Ascending aorta (tissue), 2 donors: ENCODE measurements at regions of chr11 and their contacts with region 1.

Region 1: GRCh38 chr11:43920598-43921419 is 21.6 kb upstream of the C11orf96 start:
- DNase-seq: peak; percentile 66 to 95
- H3K4me3 ChIP-seq: peak overlapping the region in 1 of 2 donors; percentile 9
- H3K27ac ChIP-seq: peak overlapping the region; percentile 99
- H3K4me1 ChIP-seq: peaks cover 32 to 57% of the 10 kb centered on the region in 2 donors
- H3K27me3 ChIP-seq: no peaks in the 10 kb centered on the region
- CTCF ChIP-seq: no peak

Region 2: GRCh38 chr11:43576803-43577521 is 343.8 kb before region 1 on chr11:
- intact Hi-C with region 1: no loop called
- DNase-seq: no peak
- H3K4me3 ChIP-seq: peak overlapping the region; percentile 23 to 34
- H3K27ac ChIP-seq: no peak overlapping the region
- H3K4me1 ChIP-seq: peaks cover 2 to 28% of the 10 kb centered on the region in 2 donors
- H3K27me3 ChIP-seq: peaks cover 34% of the 10 kb centered on the region
- CTCF ChIP-seq: peak in 1 of 3 experiments; percentile 30

Region 3: GRCh38 chr11:43880640-43881159 is 40.1 kb before region 1 on chr11 and contains the start of gene ALKBH3:
- intact Hi-C with region 1: no loop called
- DNase-seq: peak; percentile 63 to 96
- H3K4me3 ChIP-seq: peak within 1 kb of the TSS; percentile 90 to 92
- H3K27ac ChIP-seq: peak within 1 kb of the TSS; percentile 65 to 71
- H3K4me1 ChIP-seq: peaks cover 9 to 13% of the 10 kb centered on the region in 2 donors
- H3K27me3 ChIP-seq: no peaks in the 10 kb centered on the region
- CTCF ChIP-seq: peak in 1 of 3 experiments; percentile 10
- total RNA-seq, gene ALKBH3: 19.1 TPM

Region 4: GRCh38 chr11:43895601-43896000 is 25.2 kb before region 1 on chr11:
- intact Hi-C with region 1: no loop called
- DNase-seq: no peak
- H3K4me3 ChIP-seq: no peak overlapping the region
- H3K27ac ChIP-seq: peak overlapping the region; percentile 41 to 42
- H3K4me1 ChIP-seq: no peaks in the 10 kb centered on the region
- H3K27me3 ChIP-seq: no peaks in the 10 kb centered on the region
- CTCF ChIP-seq: no peak

Region 5: GRCh38 chr11:43944761-43945311 is 24.0 kb after region 1 on chr11:
- intact Hi-C with region 1: loop called (anchors 1 kb)
- DNase-seq: peak in 1 of 2 donors; percentile 86
- H3K4me3 ChIP-seq: peak overlapping the region; percentile 69 to 98
- H3K27ac ChIP-seq: peak overlapping the region; percentile 95 to 99
- H3K4me1 ChIP-seq: peaks cover 0 to 18% of the 10 kb centered on the region in 2 donors
- H3K27me3 ChIP-seq: no peaks in the 10 kb centered on the region
- CTCF ChIP-seq: peak; percentile 81 to 90 (median 83)

Region 6: DNA sequence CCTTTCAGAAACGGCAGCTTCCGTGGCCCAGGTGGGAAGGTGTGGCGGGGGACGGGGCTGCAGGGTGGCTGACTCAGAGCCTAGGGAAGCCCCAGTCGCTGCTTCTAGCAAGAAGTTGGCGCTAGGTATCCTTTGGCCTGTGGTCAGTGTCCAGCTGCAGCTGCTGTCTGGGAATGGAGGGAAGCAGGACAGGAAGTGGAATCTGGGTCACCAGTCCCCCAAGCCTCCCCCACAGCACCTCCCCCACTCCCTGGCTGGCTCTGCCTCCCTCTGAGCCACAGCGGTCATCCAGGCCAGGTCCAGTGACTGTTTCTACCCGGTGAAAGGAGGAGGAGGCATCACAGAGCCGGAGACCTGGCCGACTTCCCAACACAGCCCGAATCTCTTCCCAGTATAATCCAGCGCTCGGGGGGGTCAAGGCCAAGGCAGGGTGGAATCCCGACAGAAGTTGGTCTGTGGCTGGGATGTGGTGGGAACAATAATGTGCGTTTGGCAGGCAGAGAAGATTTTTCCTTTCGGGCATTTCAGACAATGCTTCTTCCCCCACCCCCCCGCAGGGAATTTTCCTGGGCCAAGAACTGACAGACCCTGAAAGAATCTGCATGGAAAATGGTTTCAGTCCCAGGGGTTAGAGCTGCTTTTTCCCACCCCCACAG is 66.7 kb after region 1 on chr11:
- intact Hi-C with region 1: loop called (anchors 2 kb)
- DNase-seq: peak; percentile 54 to 94
- H3K4me3 ChIP-seq: peak overlapping the region in 1 of 2 donors; percentile 12
- H3K27ac ChIP-seq: peak overlapping the region; percentile 77 to 83
- H3K4me1 ChIP-seq: peaks cover 9 to 32% of the 10 kb centered on the region in 2 donors
- H3K27me3 ChIP-seq: no peaks in the 10 kb centered on the region
- CTCF ChIP-seq: no peak

Region 7: DNA sequence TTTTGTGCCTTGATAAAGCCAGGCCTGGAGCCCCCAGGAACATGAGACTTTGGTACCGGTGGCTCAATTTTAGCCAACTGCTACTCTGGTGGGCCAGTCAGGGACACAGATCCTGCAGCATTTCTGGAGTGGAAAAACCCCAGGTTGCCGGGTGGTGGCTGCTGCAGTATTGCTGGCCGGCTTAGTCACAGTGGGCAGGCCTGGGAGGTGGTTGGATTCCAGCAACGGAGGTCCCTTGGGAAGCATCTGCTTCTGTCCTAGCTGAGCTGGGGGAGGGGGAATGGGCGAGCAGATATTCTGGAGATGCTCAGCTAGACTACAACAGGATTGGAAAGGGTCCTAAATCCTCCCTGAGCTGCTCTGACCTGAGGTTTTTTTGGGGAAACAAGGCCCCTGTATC is 95.3 kb after region 1 on chr11:
- intact Hi-C with region 1: loop called (anchors 2 kb)
- DNase-seq: peak; percentile 67 to 94
- H3K4me3 ChIP-seq: no peak overlapping the region
- H3K27ac ChIP-seq: peak overlapping the region; percentile 83 to 93
- H3K4me1 ChIP-seq: peaks cover 9 to 57% of the 10 kb centered on the region in 2 donors
- H3K27me3 ChIP-seq: no peaks in the 10 kb centered on the region
- CTCF ChIP-seq: no peak

Region 8: DNA sequence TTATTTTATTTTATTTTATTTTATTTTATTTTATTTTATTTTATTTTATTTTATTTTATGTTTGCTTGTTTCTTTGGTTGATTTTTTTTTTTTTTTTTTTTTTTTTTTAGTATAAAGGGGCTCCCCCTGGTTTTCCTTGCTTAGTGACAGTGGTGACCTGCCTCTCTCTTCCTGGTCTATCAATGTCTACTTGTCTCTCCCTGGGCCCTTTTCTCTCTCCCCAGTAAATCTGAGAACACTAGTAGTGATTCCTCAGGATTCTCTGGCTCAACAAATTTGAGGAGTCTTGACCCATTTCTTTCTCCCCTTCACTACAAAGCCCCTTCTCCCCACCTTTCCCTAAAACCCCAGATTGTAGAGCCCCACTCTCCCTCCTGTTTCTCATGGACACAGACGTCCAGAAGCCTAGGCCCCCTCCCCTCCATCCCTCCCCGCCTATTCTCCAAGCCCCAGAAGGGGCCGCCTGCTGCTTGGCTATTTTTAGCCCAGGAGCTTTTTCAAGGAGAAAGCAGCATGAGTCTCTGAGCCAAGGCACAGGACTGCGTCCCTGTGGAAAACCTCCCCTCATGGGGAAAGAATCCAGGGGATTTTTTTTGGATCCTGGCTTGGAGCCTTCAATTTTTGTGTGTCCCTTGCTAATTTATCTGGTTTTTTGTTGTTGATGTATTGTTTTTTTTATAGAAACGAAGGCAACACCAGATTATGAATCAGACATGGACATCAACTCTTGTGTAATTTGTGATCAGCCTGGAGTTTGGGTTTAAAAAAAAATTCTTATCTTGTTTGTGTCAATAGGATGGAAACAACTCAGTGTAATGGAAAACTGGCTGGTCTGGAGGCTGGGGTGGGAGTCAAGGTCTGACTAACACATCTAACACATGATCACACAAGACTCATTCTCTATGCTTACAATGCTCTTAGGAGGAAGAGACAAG is 109.4 kb after region 1 on chr11:
- intact Hi-C with region 1: loop called (anchors 1 kb)
- DNase-seq: peak in 1 of 2 donors; percentile 92
- H3K4me3 ChIP-seq: no peak overlapping the region
- H3K27ac ChIP-seq: peak overlapping the region; percentile 92 to 96
- H3K4me1 ChIP-seq: peaks cover 29 to 44% of the 10 kb centered on the region in 2 donors
- H3K27me3 ChIP-seq: no peaks in the 10 kb centered on the region
- CTCF ChIP-seq: no peak

Region 9: GRCh38 chr11:44600839-44601383 is 680.1 kb after region 1 on chr11:
- intact Hi-C with region 1: loop called (anchors 10 kb)
- DNase-seq: no peak
- H3K4me3 ChIP-seq: no peak overlapping the region
- H3K27ac ChIP-seq: peak overlapping the region; percentile 85 to 91
- H3K4me1 ChIP-seq: peaks cover 26 to 67% of the 10 kb centered on the region in 2 donors
- H3K27me3 ChIP-seq: no peaks in the 10 kb centered on the region
- CTCF ChIP-seq: no peak